AG04449 (cell line): ENCODE measurements at regions of chr15 and their contacts with region 1.

Region 1: GRCh38 chr15:81410318-81410753 is 36.3 kb upstream of the TMC3 start:
- DNase-seq: peak; percentile 12
- H3K4me3 ChIP-seq: no peak overlapping the region
- CTCF ChIP-seq: peak; percentile 46

Region 2: GRCh38 chr15:81939604-81940440 is 529.5 kb after region 1 on chr15:
- CTCF ChIA-PET with region 1: interaction called, 14 read pairs
- POLR2A ChIA-PET with region 1: no interaction called
- DNase-seq: no peak
- H3K4me3 ChIP-seq: no peak overlapping the region
- CTCF ChIP-seq: peak; percentile 38

Region 3: DNA sequence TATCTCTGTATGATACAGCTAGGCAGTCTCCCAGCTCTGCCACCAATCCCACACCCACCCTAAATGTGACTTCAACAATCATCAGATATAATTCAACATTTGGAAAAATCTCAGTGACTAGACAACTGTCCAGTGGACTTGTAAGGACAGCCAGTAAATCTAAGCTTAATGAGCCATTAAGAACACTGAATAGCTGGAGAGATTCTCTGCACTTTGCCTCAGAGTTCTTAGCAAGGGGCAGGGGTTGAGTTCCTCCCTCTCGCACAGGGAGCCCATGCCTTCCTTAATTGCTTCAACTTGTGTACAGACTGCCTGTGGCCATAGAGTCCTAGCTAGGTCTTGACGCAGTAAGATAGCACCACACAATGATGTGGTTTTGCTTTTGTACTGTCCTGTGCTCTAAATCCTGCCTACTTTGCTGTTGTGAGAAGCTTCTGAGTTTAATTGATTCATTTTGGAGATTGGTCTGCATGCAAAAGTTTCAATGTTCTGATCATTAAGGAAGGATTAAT is 619.9 kb after region 1 on chr15:
- CTCF ChIA-PET with region 1: no interaction called
- POLR2A ChIA-PET with region 1: no interaction called
- DNase-seq: no peak
- H3K4me3 ChIP-seq: no peak overlapping the region
- CTCF ChIP-seq: no peak

Region 4: GRCh38 chr15:82197733-82198594 is 787.6 kb after region 1 on chr15:
- CTCF ChIA-PET with region 1: interaction called, 10 read pairs
- POLR2A ChIA-PET with region 1: no interaction called
- DNase-seq: no peak
- H3K4me3 ChIP-seq: no peak overlapping the region
- CTCF ChIP-seq: peak; percentile 79